PC-9 (cell line): ENCODE measurements at regions of chr1 and their contacts with region 1.

Region 1: DNA sequence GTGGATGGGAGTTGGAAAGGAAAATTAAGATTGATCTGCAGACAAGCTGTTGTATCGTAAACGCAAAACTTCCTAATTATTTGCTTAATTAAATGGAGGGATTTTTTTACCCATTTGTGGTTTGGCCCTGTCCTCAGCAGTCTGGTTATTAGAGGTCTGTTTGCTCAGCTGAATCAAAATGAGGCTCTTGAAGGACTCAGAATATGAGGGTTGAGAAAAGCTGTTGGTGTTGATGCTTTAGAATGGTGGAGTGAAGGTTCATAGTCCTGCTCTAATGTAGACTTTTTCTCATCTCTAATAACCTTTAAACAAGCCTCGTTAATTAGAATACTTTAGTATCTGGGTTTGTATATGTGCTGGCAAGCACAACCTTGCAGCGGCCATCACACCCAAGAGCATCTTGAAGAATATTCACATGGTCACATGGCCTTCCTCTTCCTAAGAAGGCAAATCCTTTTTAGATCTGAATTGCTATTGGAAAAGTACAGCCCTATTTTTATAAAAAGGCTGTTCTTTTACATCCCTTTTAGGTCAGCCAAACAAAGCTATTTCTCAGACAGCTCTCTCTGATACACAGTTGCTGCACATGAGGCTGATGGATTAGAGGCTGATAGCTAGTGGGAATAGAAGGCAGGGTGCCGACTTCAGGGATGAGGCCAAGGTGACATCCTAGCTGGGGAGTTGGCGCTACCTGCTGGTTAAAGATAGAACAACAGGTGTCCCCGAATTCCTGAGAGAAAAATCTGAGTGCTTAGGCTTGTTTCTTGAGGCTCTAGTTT is 53.8 kb downstream of the MACF1 start:
- DNase-seq: peak; percentile 47 to 78
- H3K4me3 ChIP-seq: no peak overlapping the region
- H3K27ac ChIP-seq: no peak overlapping the region
- H3K4me1 ChIP-seq: 0 out of 2 replicates have a peak, but pooled peaks cover 5% of the 10 kb centered on the region
- H3K27me3 ChIP-seq: no peaks in the 10 kb centered on the region
- CTCF ChIP-seq: peak; percentile 94

Region 2: GRCh38 chr1:39132505-39133339 is 125.6 kb before region 1 on chr1:
- CTCF ChIA-PET with region 1: interaction called, 4 read pairs
- POLR2A ChIA-PET with region 1: no interaction called
- intact Hi-C with region 1: loop called (anchors 10 kb)
- DNase-seq: peak; percentile 94 to 95
- H3K4me3 ChIP-seq: no peak overlapping the region
- H3K27ac ChIP-seq: peak overlapping the region; percentile 77
- H3K4me1 ChIP-seq: peaks cover 70% of the 10 kb centered on the region
- H3K27me3 ChIP-seq: no peaks in the 10 kb centered on the region
- CTCF ChIP-seq: peak; percentile 67

Region 3: GRCh38 chr1:39398278-39399021 is 140.1 kb after region 1 on chr1:
- CTCF ChIA-PET with region 1: interaction called, 5 read pairs
- POLR2A ChIA-PET with region 1: no interaction called
- intact Hi-C with region 1: loop called (anchors 5 kb)
- DNase-seq: peak; percentile 91 to 100
- H3K4me3 ChIP-seq: peak overlapping the region; percentile 22; the same call in 1 of the 2 replicates
- H3K27ac ChIP-seq: peak overlapping the region; percentile 91
- H3K4me1 ChIP-seq: peaks cover 66% of the 10 kb centered on the region
- H3K27me3 ChIP-seq: no peaks in the 10 kb centered on the region
- CTCF ChIP-seq: no peak

Region 4: DNA sequence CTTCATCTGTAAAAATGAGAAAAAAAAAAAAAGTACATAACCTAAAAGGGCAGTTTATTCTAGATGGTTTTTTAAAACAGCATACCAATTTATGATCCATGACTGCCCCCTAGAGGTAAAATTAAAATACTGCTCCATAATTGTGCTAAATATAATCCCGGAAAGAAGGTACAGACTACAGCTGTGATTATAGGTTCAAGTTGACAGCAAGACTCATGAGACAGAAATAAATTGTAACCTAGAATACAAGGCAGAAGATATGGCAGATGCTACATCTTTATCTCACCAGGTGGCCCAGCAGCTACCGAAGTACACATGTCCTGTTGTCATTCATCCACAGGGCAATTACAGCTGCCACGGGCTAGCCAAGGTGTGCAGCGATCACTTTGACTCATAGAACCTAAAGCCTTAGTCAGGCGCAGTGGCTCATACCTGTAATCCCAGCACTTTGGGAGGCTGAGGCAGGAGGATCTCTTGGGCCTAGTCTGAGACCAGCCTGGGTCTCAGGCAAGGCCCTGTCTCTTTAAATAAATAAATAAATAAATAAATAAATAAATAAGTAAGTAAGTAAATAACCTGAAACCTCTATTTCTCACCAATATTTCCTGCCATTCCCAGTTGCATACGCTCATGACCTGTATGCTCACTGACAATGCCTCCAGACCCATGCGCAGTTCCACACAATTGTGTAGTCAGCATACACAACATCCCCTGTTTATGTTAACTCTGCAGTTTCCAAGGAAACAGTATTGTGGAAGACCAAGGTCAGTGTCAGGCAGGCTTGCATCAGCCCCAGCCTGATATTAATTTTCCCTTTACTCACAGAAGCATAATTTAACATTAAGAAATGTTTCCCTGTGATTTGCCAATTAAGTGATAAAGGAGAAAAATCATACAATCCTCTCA is 462.0 kb after region 1 on chr1:
- CTCF ChIA-PET with region 1: no interaction called
- POLR2A ChIA-PET with region 1: no interaction called
- intact Hi-C with region 1: loop called (anchors 5 kb)
- DNase-seq: peak; percentile 6 to 61
- H3K4me3 ChIP-seq: no peak overlapping the region
- H3K27ac ChIP-seq: no peak overlapping the region
- H3K4me1 ChIP-seq: no peaks in the 10 kb centered on the region
- H3K27me3 ChIP-seq: peaks cover 5% of the 10 kb centered on the region; the same call in 1 of the 2 replicates
- CTCF ChIP-seq: peak; percentile 89